Prostate gland (tissue), 2 donors: ENCODE measurements at regions of chr3 and their contacts with region 1.

Region 1: GRCh38 chr3:50542177-50543034 is 25.1 kb downstream of the C3orf18 start:
- DNase-seq: peak; percentile 60
- H3K4me3 ChIP-seq: no peak overlapping the region
- H3K27ac ChIP-seq: no peak overlapping the region
- H3K4me1 ChIP-seq: no peaks in the 10 kb centered on the region
- H3K27me3 ChIP-seq: no peaks in the 10 kb centered on the region
- CTCF ChIP-seq: peak; percentile 81 to 96 (median 90)
- POLR2A ChIP-seq: no peak

Region 2: GRCh38 chr3:50347194-50347918 is 195.1 kb before region 1 on chr3:
- intact Hi-C with region 1: loop called (anchors 2 kb)
- DNase-seq: peak; percentile 73
- H3K4me3 ChIP-seq: no peak overlapping the region
- H3K27ac ChIP-seq: peak overlapping the region in 1 of 2 donors; percentile 31
- H3K4me1 ChIP-seq: peaks cover 18% of the 10 kb centered on the region
- H3K27me3 ChIP-seq: no peaks in the 10 kb centered on the region
- CTCF ChIP-seq: peak; percentile 14 to 71 (median 52)
- POLR2A ChIP-seq: no peak

Region 3: DNA sequence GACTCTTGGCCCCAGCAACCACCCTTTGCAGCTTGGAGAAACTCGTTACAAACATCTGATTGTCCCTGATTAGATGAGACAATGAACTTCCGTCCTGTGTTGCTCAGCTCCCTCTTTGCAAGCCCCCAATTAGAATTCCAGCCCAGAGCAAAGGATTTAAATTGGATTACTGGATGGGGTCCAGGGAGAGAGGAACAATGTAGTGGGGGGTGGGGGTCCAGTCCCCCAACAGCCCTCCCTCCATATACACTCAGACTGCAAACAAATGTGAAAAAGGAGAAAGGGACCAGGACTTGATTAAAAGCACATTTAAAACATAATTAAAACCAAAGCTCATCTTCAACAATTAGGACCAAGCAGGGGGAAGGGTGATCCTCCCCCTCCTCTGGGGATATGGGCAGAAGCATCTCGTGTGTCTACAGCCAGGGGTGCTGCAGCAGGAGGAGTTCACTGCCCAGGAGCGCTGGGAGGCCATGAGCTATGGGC is 111.4 kb before region 1 on chr3:
- intact Hi-C with region 1: loop called (anchors 5 kb)
- DNase-seq: no peak
- H3K4me3 ChIP-seq: no peak overlapping the region
- H3K27ac ChIP-seq: no peak overlapping the region
- H3K4me1 ChIP-seq: no peaks in the 10 kb centered on the region
- H3K27me3 ChIP-seq: no peaks in the 10 kb centered on the region
- CTCF ChIP-seq: no peak
- POLR2A ChIP-seq: no peak